Activated CD4-positive, alpha-beta T cell treated with anti-CD3 and anti-CD28 coated beads for 36 hours (primary cell): ENCODE measurements at regions of chr6 and their contacts with region 1.

Region 1: GRCh38 chr6:35583893-35584688 is 71.4 kb upstream of the TULP1 start:
- DNase-seq: peak; percentile 86
- ATAC-seq: peak; percentile 73
- H3K4me3 Mint-ChIP-seq: no peak overlapping the region
- H3K27ac Mint-ChIP-seq: no peak overlapping the region
- H3K4me1 Mint-ChIP-seq: peaks cover 61% of the 10 kb centered on the region
- H3K27me3 Mint-ChIP-seq: no peaks in the 10 kb centered on the region

Region 2: DNA sequence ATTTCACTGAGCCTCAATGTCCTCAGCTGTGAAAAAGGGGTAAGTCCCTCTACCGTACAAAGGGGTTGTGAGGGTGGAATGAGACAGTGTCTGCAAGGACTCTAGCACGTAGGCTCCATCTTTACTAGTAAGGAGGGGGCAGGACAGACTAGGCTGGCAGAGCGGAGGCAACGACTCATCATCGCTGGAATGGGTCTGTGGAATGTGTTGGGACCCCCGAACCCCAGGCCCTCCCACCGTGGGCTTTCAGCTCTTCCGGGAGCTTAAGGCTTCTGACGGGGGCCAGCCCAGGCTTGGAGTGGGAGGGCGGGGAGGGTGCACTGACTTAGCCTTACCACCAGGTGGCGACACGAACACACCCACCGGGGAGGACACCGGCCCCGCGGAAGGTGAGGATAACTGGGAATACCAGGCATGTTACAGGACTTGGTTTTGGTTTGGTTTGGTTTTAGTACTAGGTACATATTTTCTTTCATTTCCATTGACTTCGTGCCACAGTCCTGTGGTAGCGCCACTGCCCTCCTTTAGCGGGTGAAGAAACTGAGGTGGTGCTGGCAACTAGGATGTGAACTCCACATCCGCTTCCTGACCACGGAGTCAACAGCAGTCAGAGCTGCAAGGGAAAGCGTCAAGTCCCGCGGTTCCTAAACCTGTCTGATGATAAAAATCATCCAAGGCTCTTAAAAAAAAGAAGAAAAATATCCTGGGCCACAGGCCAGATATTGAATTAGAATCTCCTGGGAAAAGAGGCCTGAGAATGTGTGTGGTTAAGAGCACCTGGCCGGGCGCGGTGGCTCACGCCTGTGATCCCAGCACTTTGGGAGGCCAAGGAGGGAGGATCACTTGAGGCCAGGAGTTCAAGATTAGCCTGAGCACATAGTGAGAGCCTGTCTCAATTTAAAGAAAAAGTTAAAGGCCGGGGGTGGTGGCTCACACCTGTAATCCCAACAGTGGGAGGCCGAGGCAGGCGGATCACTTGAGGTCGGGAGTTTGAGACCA is 61.1 kb before region 1 on chr6:
- CTCF ChIA-PET with region 1: interaction called, 3 read pairs
- POLR2A ChIA-PET with region 1: no interaction called
- intact Hi-C with region 1: loop called in 1 of 2 experiments (anchors 2 kb)
- DNase-seq: peak; percentile 90
- ATAC-seq: peak; percentile 91
- H3K4me3 Mint-ChIP-seq: peak overlapping the region; percentile 57
- H3K27ac Mint-ChIP-seq: peak overlapping the region; percentile 81
- H3K4me1 Mint-ChIP-seq: peaks cover 5% of the 10 kb centered on the region
- H3K27me3 Mint-ChIP-seq: no peaks in the 10 kb centered on the region

Region 3: DNA sequence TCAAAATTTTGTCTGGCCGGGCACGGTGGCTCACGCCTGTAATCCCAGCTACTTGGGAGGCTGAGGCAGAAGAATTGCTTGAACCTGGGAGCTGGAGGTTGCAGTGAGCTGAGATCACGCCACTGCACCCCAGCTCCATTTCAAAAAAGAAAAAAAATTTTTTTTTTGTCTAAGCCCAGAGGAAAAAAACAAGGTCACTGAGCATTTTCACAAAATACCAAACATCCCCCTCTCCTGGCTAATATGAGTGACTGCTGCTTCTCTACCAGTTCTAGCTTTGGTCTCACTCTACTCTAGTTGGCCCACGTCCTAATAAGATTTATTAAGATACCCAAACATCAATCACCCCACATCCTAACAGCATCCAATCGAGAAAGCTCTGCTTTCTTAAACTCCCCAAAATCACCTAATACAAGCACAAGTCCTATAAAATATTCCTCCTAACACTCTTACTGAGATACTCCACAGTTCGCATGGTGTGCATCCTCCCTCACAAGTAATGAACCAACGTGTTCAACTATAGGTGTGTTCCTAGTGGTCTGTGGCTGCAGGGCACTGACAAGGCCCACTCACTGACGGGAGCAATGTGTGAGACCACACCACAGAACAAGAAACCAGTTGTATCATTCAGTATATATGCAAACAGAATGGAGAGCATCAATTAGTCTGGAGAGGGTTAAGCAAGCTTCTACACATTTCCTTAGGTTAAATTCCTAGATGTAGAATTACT is 40.4 kb after region 1 on chr6:
- CTCF ChIA-PET with region 1: interaction called, 63 read pairs
- POLR2A ChIA-PET with region 1: no interaction called
- intact Hi-C with region 1: loop called (anchors 1 to 2 kb)
- DNase-seq: no peak
- ATAC-seq: peak; percentile 57
- H3K4me3 Mint-ChIP-seq: no peak overlapping the region
- H3K27ac Mint-ChIP-seq: peak overlapping the region; percentile 58
- H3K4me1 Mint-ChIP-seq: peaks cover 41% of the 10 kb centered on the region
- H3K27me3 Mint-ChIP-seq: no peaks in the 10 kb centered on the region

Region 4: GRCh38 chr6:35688581-35689322 is 104.7 kb after region 1 on chr6 and contains the start of gene FKBP5:
- CTCF ChIA-PET with region 1: interaction called, 9 read pairs
- POLR2A ChIA-PET with region 1: no interaction called
- intact Hi-C with region 1: loop called (anchors 1 to 2 kb)
- DNase-seq: peak; percentile 94
- ATAC-seq: peak; percentile 95
- H3K4me3 Mint-ChIP-seq: peak within 1 kb of the TSS; percentile 93
- H3K27ac Mint-ChIP-seq: peak within 1 kb of the TSS; percentile 93
- H3K4me1 Mint-ChIP-seq: peaks cover 8% of the 10 kb centered on the region
- H3K27me3 Mint-ChIP-seq: no peaks in the 10 kb centered on the region
- total RNA-seq, gene FKBP5: 140 to 141 TPM

Region 5: GRCh38 chr6:35955976-35956375 is 371.9 kb after region 1 on chr6:
- CTCF ChIA-PET with region 1: no interaction called
- POLR2A ChIA-PET with region 1: no interaction called
- intact Hi-C with region 1: loop called in 1 of 2 experiments (anchors 10 kb)
- DNase-seq: peak; percentile 56
- ATAC-seq: no peak
- H3K4me3 Mint-ChIP-seq: no peak overlapping the region
- H3K27ac Mint-ChIP-seq: no peak overlapping the region
- H3K4me1 Mint-ChIP-seq: peaks cover 14% of the 10 kb centered on the region
- H3K27me3 Mint-ChIP-seq: peaks cover 5% of the 10 kb centered on the region